Activated CD4-positive, alpha-beta memory T cell treated with anti-CD3 and anti-CD28 coated beads, Interleukin-2, amount 10 ng/mL, durations not matched to agents 7 days and 5 days (primary cell): ENCODE measurements at regions of chr17 and their contacts with region 1.

Region 1: DNA sequence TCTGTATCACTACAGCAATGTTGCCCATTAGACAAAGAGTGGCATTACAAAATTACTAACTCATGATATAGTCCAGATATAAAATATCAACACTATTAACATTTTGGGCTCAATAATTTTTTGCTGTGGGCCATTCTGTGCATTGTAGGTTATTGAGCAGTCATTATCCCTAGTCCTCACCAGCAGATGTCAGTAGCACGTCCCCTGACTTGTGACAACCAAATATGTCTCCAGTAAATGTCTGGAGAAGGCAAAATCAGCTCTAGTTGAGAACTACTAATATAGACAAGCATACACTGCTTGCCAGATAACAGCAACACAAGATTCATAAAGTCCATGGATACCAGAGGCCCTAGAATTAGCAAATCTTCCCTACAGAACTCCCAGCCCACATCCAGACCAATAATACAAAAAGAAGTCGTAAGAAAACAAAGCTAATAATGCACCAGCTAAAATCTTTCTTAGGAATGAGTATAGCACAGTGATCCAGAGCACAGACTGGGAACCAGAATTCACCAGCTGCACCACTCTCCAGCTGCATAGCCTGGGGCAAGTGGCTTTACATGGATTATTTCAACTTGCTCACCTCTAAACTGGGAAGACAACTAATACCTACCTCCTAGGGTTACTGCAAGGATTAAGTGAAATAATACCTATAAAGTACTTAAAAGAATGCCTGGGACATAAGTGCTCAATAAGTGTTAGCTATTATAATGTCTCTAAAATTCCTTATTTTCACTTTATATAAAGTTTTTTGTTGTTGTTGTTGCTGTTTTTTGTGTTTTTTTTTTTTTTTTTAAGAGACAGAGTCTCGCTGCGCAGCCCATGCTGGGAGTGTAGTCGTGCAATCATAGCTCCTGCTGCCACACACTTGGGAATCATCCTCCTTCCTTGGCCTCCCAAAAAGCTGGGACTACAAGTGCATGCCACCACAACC is 23.7 kb downstream of the HELZ start:
- DNase-seq: peak; percentile 54
- H3K4me3 Mint-ChIP-seq: no peak overlapping the region
- H3K27ac Mint-ChIP-seq: no peak overlapping the region
- H3K4me1 Mint-ChIP-seq: peaks cover 35% of the 10 kb centered on the region
- H3K27me3 Mint-ChIP-seq: no peaks in the 10 kb centered on the region

Region 2: GRCh38 chr17:67293251-67294203 is 72.2 kb after region 1 on chr17:
- CTCF ChIA-PET with region 1: interaction called, 40 read pairs
- POLR2A ChIA-PET with region 1: interaction called, 5 read pairs
- DNase-seq: peak; percentile 81
- H3K4me3 Mint-ChIP-seq: no peak overlapping the region
- H3K27ac Mint-ChIP-seq: no peak overlapping the region
- H3K4me1 Mint-ChIP-seq: peaks cover 5% of the 10 kb centered on the region
- H3K27me3 Mint-ChIP-seq: no peaks in the 10 kb centered on the region